Motor neuron (in vitro differentiated cells): ENCODE measurements at regions of chr14 and their contacts with region 1.

Region 1: DNA sequence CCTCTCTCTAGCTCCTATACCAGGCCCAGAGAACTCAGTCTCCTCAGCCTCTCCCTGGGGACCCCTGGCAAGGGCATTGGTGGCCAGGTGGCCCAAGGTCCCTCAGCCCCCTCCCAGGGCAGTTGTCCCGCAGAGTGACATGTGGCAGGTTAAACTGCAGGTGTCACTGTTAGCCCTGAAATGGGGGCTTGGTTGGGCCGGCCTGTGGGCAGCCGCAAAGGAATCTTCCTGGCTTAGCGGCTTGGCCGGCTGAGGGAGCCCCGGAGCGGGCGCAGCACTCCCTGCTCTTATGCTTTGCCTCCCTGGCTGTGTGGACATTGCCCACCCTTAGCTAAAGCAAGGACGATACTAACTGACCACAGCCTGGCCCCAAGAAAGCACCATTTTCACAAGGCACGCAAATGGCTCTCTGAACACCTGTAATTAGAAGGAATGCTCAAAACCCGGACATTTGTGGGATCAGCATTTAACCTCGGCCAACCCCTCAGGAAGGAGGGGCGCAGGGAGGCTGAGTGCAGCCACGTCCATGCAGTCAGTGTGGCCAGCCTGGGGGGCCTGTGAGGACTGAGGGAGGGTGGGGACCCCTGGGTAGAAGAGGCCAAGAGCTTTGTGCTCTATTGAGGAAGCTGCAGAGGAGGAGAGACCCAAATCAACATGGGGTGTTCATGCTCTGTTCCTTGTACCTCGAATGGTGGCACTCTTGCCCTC is 82.2 kb downstream of the PAPOLA start:
- ATAC-seq: peak; percentile 49 to 99 (median 96)
- H3K4me3 ChIP-seq: no peak overlapping the region
- H3K27ac ChIP-seq: no peak overlapping the region
- H3K4me1 ChIP-seq: peaks cover 15 to 27% of the 10 kb centered on the region in 2 donors

Region 2: GRCh38 chr14:96735526-96735925 is 151.2 kb after region 1 on chr14:
- in situ Hi-C with region 1: loop called in 6 of 9 experiments (anchors 10 to 25 kb)
- ATAC-seq: peak in 5 of 8 experiments; percentile 56 to 91 (median 86)
- H3K4me3 ChIP-seq: no peak overlapping the region
- H3K27ac ChIP-seq: no peak overlapping the region
- H3K4me1 ChIP-seq: peaks cover 25 to 27% of the 10 kb centered on the region in 2 donors

Region 3: DNA sequence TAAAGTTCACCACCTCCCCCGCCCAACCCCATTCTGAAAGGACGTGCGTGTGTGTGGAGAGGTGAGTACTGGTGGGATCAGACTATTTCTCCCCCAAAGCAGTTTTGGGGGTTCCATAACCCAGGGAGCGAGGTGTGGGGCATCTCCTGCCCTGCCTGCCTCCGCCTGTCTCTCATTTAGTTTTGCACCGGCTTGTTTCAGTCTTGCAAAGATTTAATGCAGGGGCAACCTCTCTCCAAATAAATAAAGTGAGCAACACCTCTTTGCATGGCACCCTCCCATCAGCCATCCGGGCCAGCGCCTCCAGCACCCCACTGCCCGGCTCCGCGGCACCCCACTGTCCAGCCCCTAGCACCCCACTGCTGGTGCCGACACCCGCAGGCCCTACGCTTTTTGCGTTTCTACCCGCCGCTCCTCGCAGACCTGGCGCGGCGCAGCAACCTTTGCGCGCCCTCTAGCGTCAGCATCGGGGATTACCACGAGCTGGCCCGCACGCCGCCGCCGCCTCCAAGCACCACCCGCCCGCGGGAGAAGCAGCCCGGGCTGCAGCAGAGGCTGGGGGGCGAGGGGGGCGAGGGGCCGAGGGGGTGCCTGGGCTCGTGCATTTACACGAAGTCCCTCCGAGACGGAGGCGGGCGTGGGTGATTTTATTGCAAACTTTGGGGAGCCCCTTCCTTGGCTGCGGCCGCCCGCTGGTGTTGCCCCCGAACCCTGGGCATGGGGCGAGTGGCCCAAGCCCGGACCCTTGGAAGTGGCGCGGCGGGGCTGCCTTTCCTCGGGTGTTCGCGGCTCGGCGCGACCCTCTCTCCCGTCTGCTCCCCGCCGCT is 157.0 kb after region 1 on chr14:
- in situ Hi-C with region 1: loop called in 6 of 9 experiments (anchors 10 to 25 kb)
- ATAC-seq: peak; percentile 85 to 92 (median 90)
- H3K4me3 ChIP-seq: peak overlapping the region; percentile 26 to 40 (median 29)
- H3K27ac ChIP-seq: no peak overlapping the region
- H3K4me1 ChIP-seq: peaks cover 15 to 16% of the 10 kb centered on the region in 2 donors

Region 4: GRCh38 chr14:96796851-96797581 is 212.7 kb after region 1 on chr14 and contains the start of gene VRK1:
- in situ Hi-C with region 1: no loop called
- ATAC-seq: peak; percentile 97 to 100 (median 99)
- H3K4me3 ChIP-seq: peak within 1 kb of the TSS; percentile 47 to 95 (median 85)
- H3K27ac ChIP-seq: peak within 1 kb of the TSS in 1 of 2 donors; percentile 60
- H3K4me1 ChIP-seq: peaks cover 18 to 30% of the 10 kb centered on the region in 2 donors
- total RNA-seq, gene VRK1: 6.8 to 52.5 (median 28.2) TPM